CD4-positive, alpha-beta memory T cell (primary cell): ENCODE measurements at regions of chr3 and their contacts with region 1.

Region 1: GRCh38 chr3:172476347-172476746 is 28.1 kb upstream of the GHSR start:
- DNase-seq: no peak
- H3K4me3 ChIP-seq: peak overlapping the region in 1 of 2 donors; percentile 54
- H3K4me3 Mint-ChIP-seq: peak overlapping the region; percentile 67 to 96 (median 90)
- H3K27ac ChIP-seq: peak overlapping the region; percentile 54
- H3K27ac Mint-ChIP-seq: peak overlapping the region in 6 of 7 donors; percentile 32 to 94 (median 86)
- H3K4me1 ChIP-seq: peaks cover 19% of the 10 kb centered on the region
- H3K4me1 Mint-ChIP-seq: peaks cover 14 to 22% (median 16%) of the 10 kb centered on the region in 4 donors
- H3K27me3 ChIP-seq: no peaks in the 10 kb centered on the region
- H3K27me3 Mint-ChIP-seq: peaks cover 0 to 2% of the 10 kb centered on the region in 2 donors

Region 2: DNA sequence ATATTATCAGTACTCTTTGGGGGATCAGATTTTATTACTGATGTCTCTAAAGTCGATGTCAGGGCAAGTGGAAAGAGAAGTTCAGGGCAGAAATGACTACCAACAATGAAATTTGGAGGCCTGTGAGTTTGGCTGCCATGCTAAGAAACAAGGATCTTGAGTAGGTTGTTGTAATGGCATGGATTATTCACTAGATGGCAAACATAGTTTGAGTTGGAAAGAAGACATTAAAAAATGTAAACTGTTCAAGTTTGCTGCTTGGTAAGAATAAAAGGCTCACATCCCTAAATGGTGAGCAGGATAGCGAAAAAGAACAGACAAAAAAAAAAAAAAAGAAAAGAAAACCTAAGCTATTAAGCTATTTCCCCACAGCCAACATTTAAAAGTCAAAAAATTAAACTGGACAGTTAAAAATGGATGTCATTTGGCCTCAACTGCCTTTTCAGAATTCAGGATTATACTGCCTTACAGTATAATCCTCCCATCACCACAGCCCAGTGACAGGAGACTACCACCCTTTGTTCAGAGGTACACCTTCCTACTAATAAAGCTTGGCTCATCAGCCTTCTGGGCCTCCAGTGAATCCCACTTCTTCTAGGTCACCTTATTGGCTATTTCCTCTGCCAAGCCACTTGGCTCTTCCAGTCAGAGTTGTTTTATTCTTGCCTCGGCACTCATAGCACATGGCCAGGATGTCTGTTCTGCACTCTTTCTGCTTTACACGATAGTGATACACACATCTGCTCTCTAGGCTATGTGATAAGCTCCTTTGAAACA is 829.8 kb before region 1 on chr3:
- CTCF ChIA-PET with region 1: no interaction called
- POLR2A ChIA-PET with region 1: no interaction called
- intact Hi-C with region 1: loop called (anchors 5 kb)
- DNase-seq: peak in 4 of 5 donors; percentile 5 to 12 (median 6)
- H3K4me3 ChIP-seq: no peak overlapping the region
- H3K4me3 Mint-ChIP-seq: no peak overlapping the region
- H3K27ac ChIP-seq: no peak overlapping the region
- H3K27ac Mint-ChIP-seq: no peak overlapping the region
- H3K4me1 ChIP-seq: no peaks in the 10 kb centered on the region
- H3K4me1 Mint-ChIP-seq: no peaks in the 10 kb centered on the region
- H3K27me3 ChIP-seq: no peaks in the 10 kb centered on the region
- H3K27me3 Mint-ChIP-seq: no peaks in the 10 kb centered on the region

Region 3: DNA sequence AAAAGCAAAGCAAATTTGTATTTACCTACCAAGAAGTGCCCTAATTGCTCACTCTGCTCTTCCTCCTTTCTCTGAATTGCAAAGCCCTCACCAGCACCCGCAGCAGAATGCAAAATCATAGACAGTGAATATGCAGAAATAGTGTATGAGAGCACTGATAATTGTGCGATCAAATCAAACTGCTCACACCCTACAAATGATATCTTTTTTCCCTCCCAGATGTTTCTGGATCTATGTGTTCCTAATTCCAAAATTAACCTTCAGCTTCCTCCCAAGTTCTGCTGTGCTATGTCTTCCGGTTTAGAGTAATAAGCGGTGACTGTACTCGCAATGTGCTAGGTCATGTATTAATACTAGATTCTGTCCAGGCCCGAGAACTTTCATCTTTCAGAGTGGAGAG is 31.5 kb before region 1 on chr3:
- CTCF ChIA-PET with region 1: no interaction called
- POLR2A ChIA-PET with region 1: no interaction called
- intact Hi-C with region 1: no loop called
- DNase-seq: no peak
- H3K4me3 ChIP-seq: no peak overlapping the region
- H3K4me3 Mint-ChIP-seq: peak overlapping the region in 1 of 8 donors; percentile 32
- H3K27ac ChIP-seq: no peak overlapping the region
- H3K27ac Mint-ChIP-seq: no peak overlapping the region
- H3K4me1 ChIP-seq: peaks cover 26% of the 10 kb centered on the region
- H3K4me1 Mint-ChIP-seq: peaks cover 16 to 33% (median 27%) of the 10 kb centered on the region in 4 donors
- H3K27me3 ChIP-seq: peaks cover 8% of the 10 kb centered on the region
- H3K27me3 Mint-ChIP-seq: peaks cover 62 to 63% of the 10 kb centered on the region in 2 donors

Region 4: GRCh38 chr3:172461530-172462138 is 14.7 kb before region 1 on chr3:
- CTCF ChIA-PET with region 1: interaction called, 48 read pairs
- POLR2A ChIA-PET with region 1: interaction called, 7 read pairs
- intact Hi-C with region 1: loop called (anchors 1 kb)
- DNase-seq: peak in 4 of 5 donors; percentile 20 to 39 (median 28)
- H3K4me3 ChIP-seq: no peak overlapping the region
- H3K4me3 Mint-ChIP-seq: no peak overlapping the region
- H3K27ac ChIP-seq: no peak overlapping the region
- H3K27ac Mint-ChIP-seq: no peak overlapping the region
- H3K4me1 ChIP-seq: no peaks in the 10 kb centered on the region
- H3K4me1 Mint-ChIP-seq: peaks cover 0 to 3% (median 1%) of the 10 kb centered on the region in 4 donors
- H3K27me3 ChIP-seq: no peaks in the 10 kb centered on the region
- H3K27me3 Mint-ChIP-seq: peaks cover 0 to 2% of the 10 kb centered on the region in 2 donors

Region 5: GRCh38 chr3:172568701-172569100 is 92.4 kb after region 1 on chr3:
- CTCF ChIA-PET with region 1: no interaction called
- POLR2A ChIA-PET with region 1: no interaction called
- intact Hi-C with region 1: no loop called
- DNase-seq: no peak
- H3K4me3 ChIP-seq: no peak overlapping the region
- H3K4me3 Mint-ChIP-seq: peak overlapping the region in 1 of 8 donors; percentile 47
- H3K27ac ChIP-seq: no peak overlapping the region
- H3K27ac Mint-ChIP-seq: no peak overlapping the region
- H3K4me1 ChIP-seq: peaks cover 5% of the 10 kb centered on the region
- H3K4me1 Mint-ChIP-seq: peaks cover 13 to 20% (median 18%) of the 10 kb centered on the region in 4 donors
- H3K27me3 ChIP-seq: no peaks in the 10 kb centered on the region
- H3K27me3 Mint-ChIP-seq: no peaks in the 10 kb centered on the region

Region 6: DNA sequence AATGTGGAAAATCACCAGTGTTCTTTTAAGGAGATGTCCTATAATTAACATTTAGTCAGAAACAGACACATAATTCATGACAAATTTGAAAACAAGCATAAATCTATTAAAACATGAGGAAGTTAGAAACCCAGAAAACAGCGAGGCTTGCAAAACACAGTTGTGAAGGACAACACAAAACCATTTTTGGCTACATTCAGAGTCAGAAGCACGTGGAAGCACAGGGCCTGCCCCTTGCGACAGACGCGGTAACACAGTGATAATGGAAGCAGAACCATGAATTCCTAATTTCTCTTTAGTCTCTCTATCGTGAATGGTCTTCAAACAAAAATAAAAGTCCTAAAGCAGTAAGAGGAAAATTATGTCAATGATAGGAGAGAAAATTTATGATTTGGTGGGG is 222.3 kb after region 1 on chr3:
- CTCF ChIA-PET with region 1: no interaction called
- POLR2A ChIA-PET with region 1: no interaction called
- intact Hi-C with region 1: no loop called
- DNase-seq: no peak
- H3K4me3 ChIP-seq: no peak overlapping the region
- H3K4me3 Mint-ChIP-seq: no peak overlapping the region
- H3K27ac ChIP-seq: no peak overlapping the region
- H3K27ac Mint-ChIP-seq: no peak overlapping the region
- H3K4me1 ChIP-seq: no peaks in the 10 kb centered on the region
- H3K4me1 Mint-ChIP-seq: peaks cover 0 to 6% (median 2%) of the 10 kb centered on the region in 4 donors
- H3K27me3 ChIP-seq: no peaks in the 10 kb centered on the region
- H3K27me3 Mint-ChIP-seq: no peaks in the 10 kb centered on the region